Activated naive CD4-positive, alpha-beta T cell treated with anti-CD3 and anti-CD28 coated beads for 36 hours (primary cell): ENCODE measurements at regions of chr4 and their contacts with region 1.

Region 1: GRCh38 chr4:76213415-76214176 is at the start of gene SCARB2:
- DNase-seq: peak; percentile 76
- H3K4me3 Mint-ChIP-seq: peak within 1 kb of the TSS; percentile 76
- H3K27ac Mint-ChIP-seq: peak within 1 kb of the TSS; percentile 74
- H3K4me1 Mint-ChIP-seq: peaks cover 31% of the 10 kb centered on the region
- H3K27me3 Mint-ChIP-seq: no peaks in the 10 kb centered on the region
- total RNA-seq, gene SCARB2: 5.4 to 7.8 TPM

Region 2: GRCh38 chr4:75514131-75514948 is 699.3 kb before region 1 on chr4 and contains the starts of genes RCHY1 and THAP6:
- CTCF ChIA-PET with region 1: no interaction called
- intact Hi-C with region 1: loop called (anchors 5 kb)
- DNase-seq: peak; percentile 94
- H3K4me3 Mint-ChIP-seq: no peak within 1 kb of the TSS
- H3K27ac Mint-ChIP-seq: peak within 1 kb of the TSS; percentile 98
- H3K4me1 Mint-ChIP-seq: peaks cover 39% of the 10 kb centered on the region
- H3K27me3 Mint-ChIP-seq: no peaks in the 10 kb centered on the region
- total RNA-seq, gene RCHY1: 31.3 to 34.6 TPM
- total RNA-seq, gene THAP6: 14.3 to 15.4 TPM

Region 3: GRCh38 chr4:75919920-75920319 is 293.7 kb before region 1 on chr4:
- CTCF ChIA-PET with region 1: no interaction called
- intact Hi-C with region 1: no loop called
- DNase-seq: no peak
- H3K4me3 Mint-ChIP-seq: no peak overlapping the region
- H3K27ac Mint-ChIP-seq: no peak overlapping the region
- H3K4me1 Mint-ChIP-seq: no peaks in the 10 kb centered on the region
- H3K27me3 Mint-ChIP-seq: no peaks in the 10 kb centered on the region

Region 4: DNA sequence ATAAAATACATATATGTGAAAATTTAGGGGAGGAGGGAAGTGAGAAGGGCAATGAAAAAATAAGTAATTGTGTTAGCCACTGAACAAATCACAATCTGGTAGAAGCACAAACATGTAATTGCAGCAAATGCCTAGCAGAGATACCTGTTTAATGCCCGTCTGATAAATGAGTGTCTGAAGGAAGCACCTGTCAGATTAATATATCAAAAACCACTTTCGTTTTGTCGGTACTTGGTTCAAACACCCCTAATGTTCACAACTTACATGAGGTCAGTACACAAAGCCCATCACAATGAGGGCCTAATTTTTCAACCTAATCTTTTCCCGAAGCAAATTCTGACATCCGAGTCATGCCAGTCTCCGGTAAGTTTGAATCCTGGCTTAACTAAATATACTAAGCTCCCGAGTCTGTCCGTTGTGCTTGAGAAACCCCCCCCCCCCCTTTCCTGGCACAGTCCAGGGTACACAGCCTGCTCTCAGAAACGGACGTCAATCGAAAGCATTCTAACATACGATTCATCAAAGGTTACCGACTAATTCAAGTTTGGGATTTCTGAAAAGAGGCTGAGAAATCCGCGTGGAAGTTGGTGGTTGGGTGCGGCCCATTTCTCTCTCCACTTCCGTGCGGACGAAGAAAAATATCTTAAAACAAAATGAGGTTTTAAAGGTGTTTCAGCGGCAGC is 223.6 kb before region 1 on chr4:
- CTCF ChIA-PET with region 1: no interaction called
- intact Hi-C with region 1: loop called (anchors 5 kb)
- DNase-seq: no peak
- H3K4me3 Mint-ChIP-seq: peak overlapping the region; percentile 85
- H3K27ac Mint-ChIP-seq: peak overlapping the region; percentile 72
- H3K4me1 Mint-ChIP-seq: peaks cover 27% of the 10 kb centered on the region
- H3K27me3 Mint-ChIP-seq: no peaks in the 10 kb centered on the region

Region 5: DNA sequence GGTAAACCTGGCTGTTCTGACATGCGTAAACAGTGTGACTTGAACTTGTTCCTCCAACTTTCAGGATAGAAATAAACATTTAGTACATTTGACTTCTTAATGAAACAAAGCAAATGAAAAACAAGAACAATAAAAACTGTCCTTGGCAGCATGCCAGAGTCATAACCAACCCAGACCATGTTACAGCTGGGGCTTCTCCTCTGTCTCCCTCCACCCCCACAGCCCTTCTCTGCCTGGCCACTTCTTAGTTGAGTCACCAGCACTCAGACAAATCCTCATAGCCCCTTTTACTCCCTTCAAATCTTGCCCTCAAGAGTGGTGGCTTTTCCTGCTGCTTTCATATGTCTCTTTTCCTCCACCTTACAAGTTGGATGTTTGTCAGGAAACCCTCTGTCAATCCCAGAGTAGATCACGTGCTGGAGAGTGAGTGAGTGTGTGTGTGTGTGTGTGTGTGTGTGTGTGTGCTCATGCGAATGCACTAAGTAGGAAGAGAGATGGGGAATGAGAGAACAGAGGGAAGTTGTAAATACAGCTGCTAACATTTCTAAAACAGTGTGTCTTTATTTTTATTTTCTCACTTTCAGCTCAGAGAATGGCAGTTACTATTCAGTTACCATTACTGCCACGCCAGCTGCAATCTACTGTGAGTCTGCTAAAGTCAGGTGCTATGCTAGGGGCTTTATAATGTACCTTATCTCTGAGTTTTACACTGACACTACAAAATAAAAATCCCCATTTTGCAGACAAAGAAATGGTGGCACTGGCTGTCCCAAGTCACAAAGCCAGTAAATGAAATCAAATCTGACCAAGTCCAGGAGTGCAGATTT is 15.0 kb before region 1 on chr4:
- CTCF ChIA-PET with region 1: interaction called, 5 read pairs
- intact Hi-C with region 1: loop called (anchors 1 kb)
- DNase-seq: peak; percentile 73
- H3K4me3 Mint-ChIP-seq: peak overlapping the region; percentile 8
- H3K27ac Mint-ChIP-seq: no peak overlapping the region
- H3K4me1 Mint-ChIP-seq: peaks cover 34% of the 10 kb centered on the region
- H3K27me3 Mint-ChIP-seq: no peaks in the 10 kb centered on the region

Region 6: DNA sequence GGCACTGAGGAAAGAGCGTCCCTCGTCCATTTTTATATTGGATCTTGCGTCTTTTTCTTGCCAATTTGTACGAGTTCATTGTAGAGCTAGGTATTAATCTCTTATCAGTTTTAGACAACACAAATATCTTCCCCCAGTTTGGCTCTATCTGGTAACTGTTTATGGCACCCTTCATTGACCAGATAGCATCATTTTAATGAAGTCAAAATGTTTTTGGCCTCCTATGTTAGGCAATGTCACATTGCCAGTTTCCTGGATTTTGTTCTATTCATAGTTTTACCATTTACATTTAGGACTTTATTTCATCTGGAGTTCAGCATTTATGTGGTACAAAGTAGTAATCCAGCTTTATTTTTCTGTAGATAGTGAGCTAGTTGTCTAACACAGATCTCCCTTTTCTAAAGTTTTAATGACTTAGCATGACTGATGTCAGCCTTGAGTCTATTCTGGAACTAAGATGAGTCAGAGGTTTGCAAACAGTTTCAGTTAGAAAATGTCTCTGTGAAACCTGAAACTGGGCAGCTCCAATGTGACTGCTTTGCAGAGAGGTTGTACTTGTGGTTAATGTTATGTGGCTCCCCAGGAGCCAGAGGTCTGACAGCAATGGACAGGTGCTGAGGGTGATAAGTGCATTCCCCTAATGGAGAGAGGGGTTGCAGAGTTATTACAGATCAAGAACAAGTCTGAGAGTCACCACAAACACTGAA is 87.6 kb after region 1 on chr4:
- CTCF ChIA-PET with region 1: no interaction called
- intact Hi-C with region 1: loop called (anchors 1 kb)
- DNase-seq: peak; percentile 60
- H3K4me3 Mint-ChIP-seq: no peak overlapping the region
- H3K27ac Mint-ChIP-seq: no peak overlapping the region
- H3K4me1 Mint-ChIP-seq: peaks cover 23% of the 10 kb centered on the region
- H3K27me3 Mint-ChIP-seq: peaks cover 4% of the 10 kb centered on the region

Region 7: DNA sequence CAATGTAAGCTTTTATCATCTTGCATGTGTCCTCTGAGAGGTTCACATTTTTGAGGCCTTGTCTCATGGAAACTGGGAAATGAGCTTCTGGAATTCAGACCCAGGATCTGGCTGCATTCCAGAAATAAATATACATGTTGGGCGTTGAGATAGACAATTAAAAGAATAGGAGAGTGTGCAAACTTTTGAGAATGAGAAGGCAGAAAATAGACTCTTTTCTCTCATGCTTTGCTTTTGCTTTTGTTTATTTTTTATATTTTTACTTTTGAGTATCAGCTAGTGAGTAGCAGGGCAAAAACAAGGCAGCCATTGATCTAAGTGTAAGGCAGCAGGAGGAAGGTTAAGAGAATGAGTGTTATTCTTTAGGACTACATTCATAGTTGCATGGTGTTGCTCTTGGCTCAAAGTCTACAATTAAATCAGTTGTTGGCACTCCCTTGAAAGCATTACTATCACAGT is 233.8 kb after region 1 on chr4:
- CTCF ChIA-PET with region 1: no interaction called
- intact Hi-C with region 1: no loop called
- DNase-seq: no peak
- H3K4me3 Mint-ChIP-seq: no peak overlapping the region
- H3K27ac Mint-ChIP-seq: no peak overlapping the region
- H3K4me1 Mint-ChIP-seq: no peaks in the 10 kb centered on the region
- H3K27me3 Mint-ChIP-seq: peaks cover 4% of the 10 kb centered on the region